ENCODE measurements at regions of chr1 and their contacts with region 1.

Region 1: DNA sequence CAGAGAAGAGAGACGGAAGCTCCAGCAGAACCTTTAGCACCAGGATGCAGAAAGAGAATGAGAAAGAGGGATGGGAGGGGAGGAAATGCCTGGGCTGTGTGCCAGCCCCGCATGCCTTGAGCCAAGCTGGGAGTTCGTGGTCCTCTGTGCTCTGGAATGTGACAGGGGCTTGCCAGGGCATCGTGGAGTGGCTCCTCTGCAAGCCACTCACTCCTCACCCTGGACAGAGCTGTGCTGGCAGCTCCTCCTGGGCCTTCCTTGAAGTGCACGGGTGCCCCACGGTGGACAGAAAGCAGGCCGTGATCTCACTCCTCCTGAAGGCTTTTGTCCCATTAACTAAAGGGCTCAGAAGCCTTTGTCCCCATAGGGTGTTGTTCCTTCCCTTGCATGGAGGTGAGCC is 34.8 kb upstream of the PRELP start:
- DNase-seq: peak; percentile 77 to 86 (median 85)
- H3K4me3 ChIP-seq: no peak overlapping the region
- H3K27ac ChIP-seq: peak overlapping the region; percentile 72 to 81
- H3K4me1 ChIP-seq: peaks cover 12% of the 10 kb centered on the region
- H3K27me3 ChIP-seq: no peaks in the 10 kb centered on the region
- CTCF ChIP-seq: peak; percentile 52 to 77 (median 74)
- EP300 ChIP-seq: no peak
- POLR2A ChIP-seq: no peak

Region 2: GRCh38 chr1:203368624-203369451 is 71.9 kb before region 1 on chr1:
- intact Hi-C with region 1: loop called in 3 of 4 experiments (anchors 5 to 10 kb)
- DNase-seq: peak; percentile 65 to 91 (median 78)
- H3K4me3 ChIP-seq: no peak overlapping the region
- H3K27ac ChIP-seq: peak overlapping the region; percentile 50 to 71
- H3K4me1 ChIP-seq: peaks cover 8% of the 10 kb centered on the region
- H3K27me3 ChIP-seq: no peaks in the 10 kb centered on the region
- CTCF ChIP-seq: peak; percentile 17 to 90 (median 89)
- EP300 ChIP-seq: peak; percentile 69
- POLR2A ChIP-seq: peak; percentile 27

Region 3: GRCh38 chr1:203475012-203475981 is 34.5 kb after region 1 on chr1 and contains the start of gene PRELP:
- intact Hi-C with region 1: loop called in 2 of 4 experiments (anchors 5 kb)
- DNase-seq: peak; percentile 66 to 87 (median 80)
- H3K4me3 ChIP-seq: peak within 1 kb of the TSS; percentile 62
- H3K27ac ChIP-seq: peak within 1 kb of the TSS; percentile 86 to 88
- H3K4me1 ChIP-seq: peaks cover 27% of the 10 kb centered on the region
- H3K27me3 ChIP-seq: no peaks in the 10 kb centered on the region
- CTCF ChIP-seq: peak in 1 of 3 donors; percentile 18
- EP300 ChIP-seq: no peak
- POLR2A ChIP-seq: peak; percentile 82
- total RNA-seq, gene PRELP: 40.9 to 185 (median 74.8) TPM

Region 4: GRCh38 chr1:203486618-203487370 is 46.0 kb after region 1 on chr1:
- intact Hi-C with region 1: loop called in 1 of 4 experiments (anchors 5 kb)
- DNase-seq: peak in 4 of 5 donors; percentile 62 to 67 (median 64)
- H3K4me3 ChIP-seq: peak overlapping the region; percentile 9
- H3K27ac ChIP-seq: peak overlapping the region; percentile 87 to 94
- H3K4me1 ChIP-seq: peaks cover 11% of the 10 kb centered on the region
- H3K27me3 ChIP-seq: no peaks in the 10 kb centered on the region
- CTCF ChIP-seq: no peak
- EP300 ChIP-seq: no peak
- POLR2A ChIP-seq: no peak